ENCODE measurements at regions of chr4 and their contacts with region 1.

Region 1: GRCh38 chr4:87114245-87115062 is 106.0 kb downstream of the KLHL8 start:
- DNase-seq: peak; percentile 67
- ATAC-seq: peak; percentile 85
- H3K4me3 Mint-ChIP-seq: no peak overlapping the region
- H3K27ac Mint-ChIP-seq: peak overlapping the region; percentile 78
- H3K4me1 Mint-ChIP-seq: peaks cover 36% of the 10 kb centered on the region
- H3K27me3 Mint-ChIP-seq: no peaks in the 10 kb centered on the region
- CTCF ChIP-seq: no peak

Region 2: GRCh38 chr4:87093443-87094123 is 20.9 kb before region 1 on chr4:
- CTCF ChIA-PET with region 1: interaction called, 12 read pairs
- POLR2A ChIA-PET with region 1: no interaction called
- DNase-seq: peak; percentile 34
- ATAC-seq: peak; percentile 73
- H3K4me3 Mint-ChIP-seq: no peak overlapping the region
- H3K27ac Mint-ChIP-seq: no peak overlapping the region
- H3K4me1 Mint-ChIP-seq: peaks cover 30% of the 10 kb centered on the region
- H3K27me3 Mint-ChIP-seq: no peaks in the 10 kb centered on the region
- CTCF ChIP-seq: no peak